A549 (cell line): ENCODE measurements at regions of chr6 and their contacts with region 1.

Region 1: GRCh38 chr6:33851959-33852358 is 48.2 kb upstream of the MLN start:
- DNase-seq: peak; percentile 31 to 43
- ATAC-seq: peak; percentile 84 to 87
- H3K4me3 ChIP-seq: no peak overlapping the region
- H3K27ac ChIP-seq: peak overlapping the region; percentile 27 to 50; a peak in 4 of 6 replicates
- H3K4me1 ChIP-seq: peaks cover 15% of the 10 kb centered on the region
- CTCF ChIP-seq: peak; percentile 36; the same call in 1 of the 3 replicates
- EP300 ChIP-seq: no peak
- POLR2A ChIP-seq: no peak
- RAD21 ChIP-seq: peak; percentile 60 to 71

Region 2: GRCh38 chr6:33875696-33876095 is 23.7 kb after region 1 on chr6:
- CTCF ChIA-PET with region 1: no interaction called
- POLR2A ChIA-PET with region 1: no interaction called
- DNase-seq: no peak
- ATAC-seq: no peak
- H3K4me3 ChIP-seq: no peak overlapping the region
- H3K27ac ChIP-seq: no peak overlapping the region
- H3K4me1 ChIP-seq: no peaks in the 10 kb centered on the region
- CTCF ChIP-seq: no peak
- EP300 ChIP-seq: no peak
- POLR2A ChIP-seq: no peak
- RAD21 ChIP-seq: no peak

Region 3: DNA sequence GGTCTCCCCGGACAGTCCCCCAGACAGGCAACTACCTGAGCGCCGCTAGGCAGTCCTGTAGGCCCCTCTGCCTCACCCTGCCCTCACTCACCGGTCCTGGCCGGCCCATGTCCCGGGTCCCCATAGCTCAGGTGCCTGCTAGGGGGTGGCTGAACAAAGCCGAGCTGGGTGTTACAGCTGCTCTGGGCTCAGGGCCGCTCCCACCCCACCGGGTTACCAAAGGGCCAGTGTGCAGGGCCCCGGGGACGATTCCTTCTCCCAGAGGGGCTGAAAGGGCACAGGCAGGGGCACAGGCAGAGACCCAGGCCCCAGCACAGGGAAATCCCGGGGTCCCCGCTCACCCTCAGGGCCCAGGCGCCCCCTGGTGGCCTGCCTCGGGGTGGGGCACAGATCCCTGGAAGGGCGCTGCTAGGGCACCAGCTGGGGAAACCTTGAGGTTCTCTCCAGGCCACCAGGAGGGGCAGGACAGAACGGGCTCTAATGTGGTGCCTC is 175.5 kb after region 1 on chr6:
- CTCF ChIA-PET with region 1: interaction called, 32 read pairs
- POLR2A ChIA-PET with region 1: no interaction called
- DNase-seq: peak; percentile 24 to 68
- ATAC-seq: peak; percentile 84 to 94
- H3K4me3 ChIP-seq: no peak overlapping the region
- H3K27ac ChIP-seq: peak overlapping the region in 1 of 2 experiments; percentile 60; a peak in 2 of 6 replicates
- H3K4me1 ChIP-seq: no peaks in the 10 kb centered on the region
- CTCF ChIP-seq: peak; percentile 63
- EP300 ChIP-seq: no peak
- POLR2A ChIP-seq: no peak
- RAD21 ChIP-seq: peak; percentile 77 to 87

Region 4: DNA sequence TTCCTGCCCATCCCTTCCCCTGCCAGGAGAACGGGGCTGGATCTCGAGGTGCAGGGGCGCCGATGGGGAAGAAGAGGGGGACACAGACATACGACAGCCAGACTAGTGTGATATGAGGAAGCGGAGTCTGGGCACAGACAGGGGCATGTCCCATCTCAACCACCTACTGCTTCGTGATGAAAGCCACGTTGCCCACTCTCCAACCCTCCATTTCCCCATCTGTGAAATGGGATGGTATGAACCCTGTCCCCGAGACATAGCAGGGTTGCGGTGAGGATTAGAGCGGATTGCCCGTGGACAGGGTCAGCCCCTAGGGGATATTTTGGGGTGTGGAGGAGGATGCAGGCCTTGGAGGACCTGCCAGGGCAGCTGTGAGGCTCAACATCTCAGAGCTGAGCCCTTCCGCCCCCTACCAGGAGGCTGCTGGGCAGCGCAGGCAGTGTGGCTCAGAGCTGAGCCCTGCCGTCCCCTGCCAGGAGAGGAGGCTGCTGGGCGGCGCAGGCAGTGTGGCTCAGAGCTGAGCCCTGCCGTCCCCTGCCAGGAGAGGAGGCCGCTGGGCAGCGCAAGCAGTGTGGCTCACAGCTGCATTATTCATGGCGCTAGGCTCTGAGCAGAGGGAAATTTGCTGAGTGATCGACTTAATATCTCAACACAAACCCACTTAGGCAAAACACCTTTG is 222.2 kb after region 1 on chr6:
- CTCF ChIA-PET with region 1: no interaction called
- POLR2A ChIA-PET with region 1: no interaction called
- DNase-seq: no peak
- ATAC-seq: peak; percentile 48 to 80; a peak in 4 of 6 replicates
- H3K4me3 ChIP-seq: no peak overlapping the region
- H3K27ac ChIP-seq: no peak overlapping the region
- H3K4me1 ChIP-seq: no peaks in the 10 kb centered on the region
- CTCF ChIP-seq: no peak
- EP300 ChIP-seq: no peak
- POLR2A ChIP-seq: no peak
- RAD21 ChIP-seq: no peak